Aorta (tissue), 5 donors: ENCODE measurements at regions of chr2 and their contacts with region 1.

Region 1: DNA sequence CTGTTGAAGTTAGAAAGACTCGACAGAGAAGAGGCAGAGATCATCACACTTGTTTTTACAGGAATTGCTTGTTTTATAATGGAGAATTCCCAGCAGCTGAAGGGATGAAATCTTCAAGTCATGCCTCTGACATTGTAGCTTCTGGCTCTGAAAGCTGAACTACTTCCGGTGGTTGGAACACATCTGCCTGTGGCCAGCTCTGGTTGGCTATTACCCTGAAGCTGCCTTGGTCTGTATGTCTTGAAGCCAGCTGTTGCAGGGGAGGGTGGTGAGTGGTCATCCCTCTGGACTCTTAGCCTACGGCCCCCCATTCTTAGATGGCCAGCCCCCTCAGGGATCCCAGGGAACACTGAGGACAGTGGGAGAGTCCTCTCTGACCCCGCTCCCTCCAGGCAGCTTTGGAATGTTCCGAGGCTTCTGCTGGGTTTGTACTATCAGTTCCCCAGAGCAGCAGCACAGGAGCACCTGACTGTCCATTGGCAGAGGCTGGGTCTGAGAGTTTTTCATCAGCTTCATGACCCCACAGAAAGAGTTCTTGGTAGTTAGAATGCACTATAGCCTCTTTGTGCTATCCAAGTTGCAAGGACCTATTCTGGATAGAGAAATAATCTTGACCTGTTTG is 87.4 kb upstream of the CAPN13 start:
- DNase-seq: no peak
- ATAC-seq: no peak
- H3K4me3 ChIP-seq: no peak overlapping the region
- H3K27ac ChIP-seq: no peak overlapping the region
- H3K4me1 ChIP-seq: no peaks in the 10 kb centered on the region
- H3K27me3 ChIP-seq: no peaks in the 10 kb centered on the region

Region 2: DNA sequence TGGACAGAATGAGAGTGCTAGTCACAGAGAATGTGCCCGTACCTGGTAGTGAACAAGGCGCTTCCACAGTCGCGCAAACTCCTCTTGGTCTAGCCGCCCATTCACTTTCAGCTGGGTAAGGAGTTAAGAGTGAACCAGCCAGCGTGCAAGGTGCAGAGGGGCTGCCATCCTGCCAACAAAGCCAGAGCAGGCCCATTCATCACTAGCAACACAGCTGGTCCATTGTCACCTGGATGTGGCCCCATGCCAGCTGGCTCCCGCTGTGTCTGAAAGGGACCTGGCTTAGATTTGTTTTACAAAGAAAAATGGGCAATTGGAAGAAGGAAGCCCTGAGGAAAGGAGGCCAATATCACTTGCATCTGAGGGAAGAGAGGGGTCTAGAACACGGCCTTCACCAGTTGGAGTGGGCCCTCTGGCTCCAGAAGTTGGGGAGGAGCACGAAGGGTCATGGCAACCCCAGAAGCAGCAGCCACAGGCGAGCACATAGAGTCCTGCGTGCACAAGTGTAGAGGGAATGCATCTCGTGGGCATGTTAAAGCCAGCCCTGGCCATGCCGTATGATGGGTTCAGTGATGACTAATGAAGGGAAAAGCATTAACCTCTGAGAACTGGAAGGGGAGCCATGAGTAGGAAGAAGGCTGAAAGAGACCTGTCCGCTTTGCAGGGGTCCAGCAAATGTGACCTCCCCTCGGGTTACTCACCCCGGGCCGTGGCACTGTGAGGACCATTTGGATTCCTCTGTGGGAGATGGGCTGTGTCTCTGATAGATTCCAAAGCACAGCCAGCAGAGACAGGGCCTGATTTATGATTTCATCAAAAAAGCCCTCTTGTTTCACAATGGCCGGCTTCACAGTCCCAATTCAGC is 157.9 kb before region 1 on chr2:
- intact Hi-C with region 1: loop called in 1 of 2 experiments (anchors 10 kb)
- DNase-seq: no peak
- ATAC-seq: no peak
- H3K4me3 ChIP-seq: no peak overlapping the region
- H3K27ac ChIP-seq: no peak overlapping the region
- H3K4me1 ChIP-seq: no peaks in the 10 kb centered on the region
- H3K27me3 ChIP-seq: no peaks in the 10 kb centered on the region

Region 3: GRCh38 chr2:30747211-30747610 is 147.4 kb before region 1 on chr2:
- intact Hi-C with region 1: no loop called
- DNase-seq: no peak
- ATAC-seq: no peak
- H3K4me3 ChIP-seq: no peak overlapping the region
- H3K27ac ChIP-seq: no peak overlapping the region
- H3K4me1 ChIP-seq: no peaks in the 10 kb centered on the region
- H3K27me3 ChIP-seq: no peaks in the 10 kb centered on the region

Region 4: GRCh38 chr2:31012406-31012805 is 117.8 kb after region 1 on chr2:
- intact Hi-C with region 1: loop called in 1 of 2 experiments (anchors 10 kb)
- DNase-seq: no peak
- ATAC-seq: no peak
- H3K4me3 ChIP-seq: no peak overlapping the region
- H3K27ac ChIP-seq: no peak overlapping the region
- H3K4me1 ChIP-seq: no peaks in the 10 kb centered on the region
- H3K27me3 ChIP-seq: no peaks in the 10 kb centered on the region